B cell (primary cell): ENCODE measurements at regions of chr7 and their contacts with region 1.

Region 1: GRCh38 chr7:47482013-47482875 is 99.7 kb downstream of the TNS3 start:
- DNase-seq: no peak
- ATAC-seq: peak; percentile 60
- H3K4me3 ChIP-seq: no peak overlapping the region
- H3K4me3 Mint-ChIP-seq: peak overlapping the region; percentile 72
- H3K27ac ChIP-seq: no peak overlapping the region
- H3K27ac Mint-ChIP-seq: peak overlapping the region; percentile 87
- H3K4me1 ChIP-seq: peaks cover 39 to 44% of the 10 kb centered on the region in 2 donors
- H3K4me1 Mint-ChIP-seq: peaks cover 64% of the 10 kb centered on the region
- H3K27me3 ChIP-seq: no peaks in the 10 kb centered on the region
- H3K27me3 Mint-ChIP-seq: no peaks in the 10 kb centered on the region
- CTCF ChIP-seq: no peak

Region 2: GRCh38 chr7:47493976-47494911 is 12.0 kb after region 1 on chr7:
- CTCF ChIA-PET with region 1: interaction called, 8 read pairs
- POLR2A ChIA-PET with region 1: interaction called, 6 read pairs
- intact Hi-C with region 1: loop called (anchors 2 kb)
- DNase-seq: no peak
- ATAC-seq: no peak
- H3K4me3 ChIP-seq: peak overlapping the region in 3 of 5 experiments; percentile 1 to 38 (median 13)
- H3K4me3 Mint-ChIP-seq: peak overlapping the region; percentile 66
- H3K27ac ChIP-seq: no peak overlapping the region
- H3K27ac Mint-ChIP-seq: peak overlapping the region; percentile 18
- H3K4me1 ChIP-seq: peaks cover 42 to 50% of the 10 kb centered on the region in 2 donors
- H3K4me1 Mint-ChIP-seq: peaks cover 57% of the 10 kb centered on the region
- H3K27me3 ChIP-seq: no peaks in the 10 kb centered on the region
- H3K27me3 Mint-ChIP-seq: no peaks in the 10 kb centered on the region
- CTCF ChIP-seq: no peak

Region 3: GRCh38 chr7:47581806-47582763 is 99.8 kb after region 1 on chr7 and contains the start of gene TNS3:
- CTCF ChIA-PET with region 1: interaction called, 6 read pairs
- POLR2A ChIA-PET with region 1: no interaction called
- intact Hi-C with region 1: loop called (anchors 5 kb)
- DNase-seq: peak; percentile 76
- ATAC-seq: peak; percentile 80
- H3K4me3 ChIP-seq: peak within 1 kb of the TSS; percentile 58 to 75 (median 70)
- H3K4me3 Mint-ChIP-seq: peak within 1 kb of the TSS; percentile 83
- H3K27ac ChIP-seq: peak within 1 kb of the TSS; percentile 13 to 40
- H3K27ac Mint-ChIP-seq: peak within 1 kb of the TSS; percentile 90
- H3K4me1 ChIP-seq: peaks cover 37 to 55% of the 10 kb centered on the region in 2 donors
- H3K4me1 Mint-ChIP-seq: peaks cover 61% of the 10 kb centered on the region
- H3K27me3 ChIP-seq: peaks cover 0 to 8% (median 0%) of the 10 kb centered on the region in 4 experiments
- H3K27me3 Mint-ChIP-seq: no peaks in the 10 kb centered on the region
- CTCF ChIP-seq: peak; percentile 33
- total RNA-seq, gene TNS3: 70.1 and 77.5 TPM in 2 replicates

Region 4: GRCh38 chr7:47600199-47601118 is 118.2 kb after region 1 on chr7:
- CTCF ChIA-PET with region 1: interaction called, 3 read pairs
- POLR2A ChIA-PET with region 1: no interaction called
- intact Hi-C with region 1: loop called (anchors 1 kb)
- DNase-seq: no peak
- ATAC-seq: peak; percentile 61
- H3K4me3 ChIP-seq: peak overlapping the region in 4 of 5 experiments; percentile 7 to 46 (median 13)
- H3K4me3 Mint-ChIP-seq: peak overlapping the region; percentile 74
- H3K27ac ChIP-seq: peak overlapping the region; percentile 57 to 63
- H3K27ac Mint-ChIP-seq: peak overlapping the region; percentile 88
- H3K4me1 ChIP-seq: peaks cover 30 to 38% of the 10 kb centered on the region in 2 donors
- H3K4me1 Mint-ChIP-seq: peaks cover 49% of the 10 kb centered on the region
- H3K27me3 ChIP-seq: no peaks in the 10 kb centered on the region
- H3K27me3 Mint-ChIP-seq: no peaks in the 10 kb centered on the region
- CTCF ChIP-seq: no peak

Region 5: GRCh38 chr7:47937065-47937683 is 454.9 kb after region 1 on chr7:
- CTCF ChIA-PET with region 1: no interaction called
- POLR2A ChIA-PET with region 1: no interaction called
- intact Hi-C with region 1: loop called (anchors 10 kb)
- DNase-seq: peak; percentile 81
- ATAC-seq: peak; percentile 91
- H3K4me3 ChIP-seq: peak overlapping the region in 3 of 5 experiments; percentile 10 to 20 (median 18)
- H3K4me3 Mint-ChIP-seq: peak overlapping the region; percentile 74
- H3K27ac ChIP-seq: no peak overlapping the region
- H3K27ac Mint-ChIP-seq: peak overlapping the region; percentile 64
- H3K4me1 ChIP-seq: peaks cover 29% of the 10 kb centered on the region in 2 donors
- H3K4me1 Mint-ChIP-seq: peaks cover 31% of the 10 kb centered on the region
- H3K27me3 ChIP-seq: no peaks in the 10 kb centered on the region
- H3K27me3 Mint-ChIP-seq: no peaks in the 10 kb centered on the region
- CTCF ChIP-seq: no peak